Ovary (tissue), 10 donors: ENCODE measurements at regions of chr6 and their contacts with region 1.

Region 1: GRCh38 chr6:90369024-90369519 is 72.4 kb upstream of the BACH2 start:
- DNase-seq: peak; percentile 52 to 78 (median 58)
- H3K4me3 ChIP-seq: no peak overlapping the region
- H3K27ac ChIP-seq: peak overlapping the region in 1 of 2 donors; percentile 81
- H3K4me1 ChIP-seq: peaks cover 2% of the 10 kb centered on the region
- H3K27me3 ChIP-seq: no peaks in the 10 kb centered on the region
- CTCF ChIP-seq: no peak
- EP300 ChIP-seq: peak; percentile 59
- POLR2A ChIP-seq: no peak

Region 2: DNA sequence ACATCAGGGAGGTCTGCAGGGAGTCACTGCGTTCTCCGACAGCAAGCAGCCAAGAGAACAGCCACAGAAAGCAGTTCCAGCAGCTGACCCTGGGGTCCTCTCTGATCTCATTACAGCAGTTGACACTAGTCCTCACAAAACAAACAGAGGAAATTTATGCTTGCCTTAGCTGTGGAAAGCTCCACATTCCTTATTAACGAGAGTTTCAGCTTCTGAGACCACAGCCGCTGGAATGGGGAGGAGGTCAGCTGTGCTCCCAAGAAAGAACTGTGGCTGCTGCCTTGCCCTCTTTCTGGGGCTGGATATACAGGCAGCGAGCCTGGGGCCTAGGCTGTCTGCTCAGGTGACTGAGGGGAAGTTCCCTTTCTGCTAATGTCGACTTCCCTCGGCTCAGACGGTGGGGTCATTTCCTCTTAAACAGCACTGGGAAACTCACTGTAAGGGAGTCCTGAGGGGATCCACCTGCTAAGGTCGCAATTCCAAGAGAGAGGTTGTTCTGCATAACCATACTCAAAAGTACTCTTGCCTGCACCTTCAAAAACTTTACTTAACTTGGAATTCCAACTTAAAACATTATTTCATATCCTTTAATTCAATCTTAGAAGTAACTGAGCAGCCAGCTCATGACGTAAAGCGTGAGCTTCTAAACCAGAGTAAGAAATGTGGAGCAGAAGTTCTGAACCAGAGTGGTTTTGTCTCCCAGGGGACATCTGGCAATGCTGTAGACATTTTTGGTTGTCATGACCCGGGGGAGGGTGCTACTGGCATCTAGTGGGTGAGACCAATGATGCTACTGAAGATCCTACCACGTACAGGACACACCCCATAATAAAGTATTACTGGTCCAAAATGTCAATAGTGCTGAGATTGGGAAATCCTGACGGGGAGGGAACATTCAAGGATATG is 152.7 kb before region 1 on chr6:
- intact Hi-C with region 1: loop called in 1 of 4 experiments (anchors 10 kb)
- DNase-seq: no peak
- H3K4me3 ChIP-seq: no peak overlapping the region
- H3K27ac ChIP-seq: no peak overlapping the region
- H3K4me1 ChIP-seq: peaks cover 18% of the 10 kb centered on the region
- H3K27me3 ChIP-seq: no peaks in the 10 kb centered on the region
- CTCF ChIP-seq: no peak
- EP300 ChIP-seq: no peak
- POLR2A ChIP-seq: no peak

Region 3: GRCh38 chr6:90458353-90459224 is 89.5 kb after region 1 on chr6:
- intact Hi-C with region 1: no loop called
- DNase-seq: no peak
- H3K4me3 ChIP-seq: no peak overlapping the region
- H3K27ac ChIP-seq: no peak overlapping the region
- H3K4me1 ChIP-seq: no peaks in the 10 kb centered on the region
- H3K27me3 ChIP-seq: no peaks in the 10 kb centered on the region
- CTCF ChIP-seq: no peak
- EP300 ChIP-seq: no peak
- POLR2A ChIP-seq: no peak

Region 4: DNA sequence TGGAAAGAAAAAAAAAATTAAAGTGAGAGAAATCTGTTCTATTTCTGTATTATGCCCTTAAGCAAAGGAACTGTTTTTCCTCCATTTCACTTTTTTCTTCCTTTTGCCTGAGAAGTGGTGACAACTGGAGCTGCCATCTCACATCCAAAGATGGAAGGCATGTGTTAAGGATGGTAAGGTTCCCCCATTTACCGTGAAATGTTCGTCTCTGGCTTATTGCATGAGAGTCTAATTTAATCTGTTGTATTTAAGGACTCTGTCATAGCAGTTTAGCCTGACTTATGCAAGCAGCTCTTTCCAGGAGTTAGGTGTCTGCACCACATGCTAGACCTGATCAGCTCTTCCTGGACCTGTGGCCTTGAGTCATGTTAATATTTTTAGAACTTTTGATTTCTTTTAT is 607.3 kb after region 1 on chr6:
- intact Hi-C with region 1: no loop called
- DNase-seq: no peak
- H3K4me3 ChIP-seq: no peak overlapping the region
- H3K27ac ChIP-seq: no peak overlapping the region
- H3K4me1 ChIP-seq: no peaks in the 10 kb centered on the region
- H3K27me3 ChIP-seq: no peaks in the 10 kb centered on the region
- CTCF ChIP-seq: no peak
- EP300 ChIP-seq: no peak
- POLR2A ChIP-seq: no peak